MCF 10A (cell line): ENCODE measurements at regions of chr18 and their contacts with region 1.

Region 1: GRCh38 chr18:28013066-28013465 is 163.9 kb downstream of the CDH2 start:
- DNase-seq: peak; percentile 15
- H3K4me3 Mint-ChIP-seq: no peak overlapping the region
- H3K27ac Mint-ChIP-seq: no peak overlapping the region
- H3K4me1 Mint-ChIP-seq: no peaks in the 10 kb centered on the region
- H3K27me3 Mint-ChIP-seq: no peaks in the 10 kb centered on the region
- CTCF ChIP-seq: peak; percentile 44

Region 2: DNA sequence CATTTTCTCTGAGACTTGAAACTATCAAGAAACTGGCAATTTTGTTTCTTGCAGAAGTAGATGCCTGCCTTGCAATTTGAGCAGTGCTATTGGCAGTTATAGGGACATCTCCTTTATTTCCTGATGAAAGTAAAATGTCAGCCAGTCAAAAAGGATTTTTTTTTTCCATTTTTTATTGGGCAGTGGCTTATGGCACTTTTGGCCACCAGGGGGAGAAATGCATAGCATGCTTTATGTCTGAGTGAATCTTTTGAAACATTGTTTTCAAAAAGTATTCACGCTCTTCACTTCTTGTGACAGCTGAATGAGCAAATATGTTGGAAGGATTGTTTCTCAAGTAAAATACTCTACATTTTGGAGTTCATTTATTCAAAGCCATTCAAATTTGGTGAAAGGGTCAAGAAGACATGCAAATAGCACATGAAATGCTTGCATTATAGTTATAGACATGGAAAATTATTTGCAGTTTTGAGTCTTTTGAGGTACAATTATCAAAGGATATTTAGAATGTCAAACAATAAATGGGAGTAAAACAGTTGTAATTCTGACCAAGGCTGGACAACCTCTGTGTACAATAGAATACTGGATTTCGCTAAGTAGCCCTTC is 327.2 kb before region 1 on chr18:
- CTCF ChIA-PET with region 1: interaction called, 5 read pairs
- POLR2A ChIA-PET with region 1: no interaction called
- intact Hi-C with region 1: loop called (anchors 10 kb)
- DNase-seq: peak; percentile 48
- H3K4me3 Mint-ChIP-seq: no peak overlapping the region
- H3K27ac Mint-ChIP-seq: no peak overlapping the region
- H3K4me1 Mint-ChIP-seq: no peaks in the 10 kb centered on the region
- H3K27me3 Mint-ChIP-seq: no peaks in the 10 kb centered on the region
- CTCF ChIP-seq: peak; percentile 59

Region 3: DNA sequence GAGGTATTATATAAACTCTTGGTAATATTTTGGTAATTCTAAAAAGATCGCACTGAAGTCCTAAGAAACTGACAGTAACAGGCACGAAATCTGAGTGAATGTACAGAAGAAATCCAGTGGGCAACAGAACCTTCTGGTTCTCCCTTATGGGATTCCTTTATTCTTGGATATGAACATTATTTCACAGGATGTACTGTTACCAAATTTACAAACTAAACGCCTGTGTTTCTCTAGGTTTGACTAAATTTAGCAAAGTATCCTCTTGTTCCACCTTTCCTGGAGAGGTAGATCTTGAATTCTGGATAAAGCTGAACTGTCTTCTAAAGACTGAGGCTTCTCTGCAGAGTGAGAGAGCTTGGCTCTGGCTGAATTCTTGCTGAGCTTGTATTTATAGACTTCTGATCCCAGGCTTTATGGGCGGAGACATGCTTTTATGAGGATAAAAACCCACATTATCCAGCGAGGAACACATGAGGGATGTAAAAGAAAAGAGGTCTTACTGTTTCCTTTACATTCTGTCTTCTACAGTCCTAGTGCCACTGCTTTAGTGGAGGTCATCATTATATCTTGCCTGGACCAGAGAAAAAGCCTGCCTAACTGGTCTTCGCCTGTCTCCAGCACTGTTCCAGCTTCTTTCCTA is 56.9 kb before region 1 on chr18:
- CTCF ChIA-PET with region 1: no interaction called
- POLR2A ChIA-PET with region 1: no interaction called
- intact Hi-C with region 1: no loop called
- DNase-seq: no peak
- H3K4me3 Mint-ChIP-seq: no peak overlapping the region
- H3K27ac Mint-ChIP-seq: no peak overlapping the region
- H3K4me1 Mint-ChIP-seq: no peaks in the 10 kb centered on the region
- H3K27me3 Mint-ChIP-seq: no peaks in the 10 kb centered on the region
- CTCF ChIP-seq: no peak

Region 4: GRCh38 chr18:27967913-27968824 is 44.9 kb before region 1 on chr18:
- CTCF ChIA-PET with region 1: no interaction called
- POLR2A ChIA-PET with region 1: no interaction called
- intact Hi-C with region 1: no loop called
- DNase-seq: no peak
- H3K4me3 Mint-ChIP-seq: no peak overlapping the region
- H3K27ac Mint-ChIP-seq: no peak overlapping the region
- H3K4me1 Mint-ChIP-seq: no peaks in the 10 kb centered on the region
- H3K27me3 Mint-ChIP-seq: no peaks in the 10 kb centered on the region
- CTCF ChIP-seq: no peak